Calu3 (cell line): ENCODE measurements at regions of chr5 and their contacts with region 1.

Region 1: DNA sequence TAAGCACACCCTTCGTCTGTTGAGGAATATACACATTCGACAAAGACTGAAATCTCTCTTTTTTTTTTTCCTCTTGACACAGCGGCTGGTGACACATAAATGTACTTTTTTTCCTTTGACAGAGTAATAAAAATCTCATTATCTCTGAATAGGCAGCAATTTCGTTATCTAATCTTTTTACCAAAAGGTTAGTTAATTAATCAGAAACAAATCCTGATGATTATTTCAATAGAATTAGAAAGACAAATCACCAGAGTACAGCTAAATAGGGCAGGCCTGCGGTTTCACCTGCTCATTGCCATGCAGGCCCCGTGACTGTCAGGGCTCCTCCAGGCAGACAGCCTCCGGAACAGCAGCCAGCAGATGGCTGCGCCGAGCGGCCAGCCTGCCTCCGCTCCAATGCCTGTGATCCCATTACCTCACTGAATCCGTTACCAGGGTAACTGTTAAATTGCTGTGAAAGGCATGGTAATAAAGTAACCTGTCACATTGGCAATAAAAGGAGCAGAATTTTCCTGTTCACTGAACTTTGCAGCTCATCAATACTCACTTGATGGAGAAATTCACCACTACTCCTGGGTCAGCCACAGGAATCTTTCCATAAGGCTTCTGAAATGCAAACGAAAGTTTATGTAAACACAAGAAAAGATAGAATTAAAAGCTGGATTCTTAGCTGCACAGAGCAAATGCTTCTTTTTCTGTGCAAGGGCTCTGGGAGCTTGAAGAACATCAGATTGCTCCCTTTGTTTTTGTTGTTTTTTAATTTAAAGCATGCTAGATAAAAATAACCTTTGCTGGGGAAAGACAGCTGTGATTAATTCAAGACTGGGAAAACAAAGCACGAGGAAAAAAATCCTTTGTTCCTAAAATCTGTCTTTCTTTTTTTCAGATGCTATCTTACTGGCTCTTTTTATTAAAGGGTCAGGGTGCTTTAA is 666.4 kb upstream of the ZNF608 start:
- DNase-seq: peak; percentile 87
- H3K4me3 Mint-ChIP-seq: peak overlapping the region; percentile 50
- H3K27ac Mint-ChIP-seq: peak overlapping the region; percentile 96
- H3K4me1 Mint-ChIP-seq: peaks cover 53% of the 10 kb centered on the region
- H3K27me3 Mint-ChIP-seq: no peaks in the 10 kb centered on the region
- CTCF ChIP-seq: no peak

Region 2: DNA sequence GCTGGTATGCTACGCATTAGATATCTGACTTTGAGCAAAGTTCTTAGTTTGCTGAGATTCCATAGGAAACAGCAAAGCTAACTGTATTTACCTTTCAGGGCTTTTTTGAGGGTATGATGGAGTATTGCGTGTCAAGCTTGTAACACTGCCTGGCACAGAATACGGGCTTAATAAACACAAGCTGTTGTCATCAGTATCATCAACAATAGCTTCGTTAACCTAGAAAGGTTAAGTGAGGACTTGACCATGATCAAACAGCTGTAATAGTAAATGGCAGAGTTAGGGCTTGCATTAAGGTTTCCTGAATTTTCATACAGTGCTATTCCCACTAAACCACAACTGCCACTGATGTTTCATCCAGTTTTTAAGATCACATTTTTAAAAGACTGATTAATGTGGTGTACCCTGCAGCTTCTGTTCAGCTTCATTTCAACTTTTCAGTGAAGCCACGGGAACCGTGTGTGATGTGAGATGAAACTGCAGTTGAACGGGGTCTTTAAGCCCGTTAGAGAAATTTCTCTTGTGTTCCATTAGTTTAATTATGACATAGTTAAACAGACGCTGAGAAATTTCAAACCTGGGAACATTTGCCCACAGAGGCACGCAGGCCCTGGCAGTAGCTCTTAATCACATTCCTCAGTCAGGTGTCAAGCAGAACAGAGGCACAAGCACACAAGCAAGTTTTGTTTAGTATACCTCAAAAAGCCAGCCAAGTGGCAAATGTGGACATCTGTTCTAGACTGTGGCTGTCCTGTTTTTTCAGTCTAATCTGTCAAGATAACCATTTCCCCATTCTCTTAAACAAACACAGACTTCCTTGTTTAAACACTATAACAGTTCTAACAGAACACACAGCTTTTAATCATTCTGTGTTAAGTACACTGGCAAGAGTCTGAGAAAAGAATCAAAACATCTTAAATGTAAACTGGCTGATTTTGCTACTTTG is 813.5 kb before region 1 on chr5:
- CTCF ChIA-PET with region 1: interaction called, 3 read pairs
- intact Hi-C with region 1: loop called (anchors 5 kb)
- DNase-seq: peak; percentile 67
- H3K4me3 Mint-ChIP-seq: peak overlapping the region; percentile 24
- H3K27ac Mint-ChIP-seq: peak overlapping the region; percentile 74
- H3K4me1 Mint-ChIP-seq: peaks cover 43% of the 10 kb centered on the region
- H3K27me3 Mint-ChIP-seq: no peaks in the 10 kb centered on the region
- CTCF ChIP-seq: no peak

Region 3: GRCh38 chr5:124748687-124749594 is 663.9 kb before region 1 on chr5:
- CTCF ChIA-PET with region 1: interaction called, 5 read pairs
- intact Hi-C with region 1: loop called (anchors 2 kb)
- DNase-seq: peak; percentile 83
- H3K4me3 Mint-ChIP-seq: peak overlapping the region; percentile 80
- H3K27ac Mint-ChIP-seq: peak overlapping the region; percentile 96
- H3K4me1 Mint-ChIP-seq: peaks cover 26% of the 10 kb centered on the region
- H3K27me3 Mint-ChIP-seq: no peaks in the 10 kb centered on the region
- CTCF ChIP-seq: no peak

Region 4: DNA sequence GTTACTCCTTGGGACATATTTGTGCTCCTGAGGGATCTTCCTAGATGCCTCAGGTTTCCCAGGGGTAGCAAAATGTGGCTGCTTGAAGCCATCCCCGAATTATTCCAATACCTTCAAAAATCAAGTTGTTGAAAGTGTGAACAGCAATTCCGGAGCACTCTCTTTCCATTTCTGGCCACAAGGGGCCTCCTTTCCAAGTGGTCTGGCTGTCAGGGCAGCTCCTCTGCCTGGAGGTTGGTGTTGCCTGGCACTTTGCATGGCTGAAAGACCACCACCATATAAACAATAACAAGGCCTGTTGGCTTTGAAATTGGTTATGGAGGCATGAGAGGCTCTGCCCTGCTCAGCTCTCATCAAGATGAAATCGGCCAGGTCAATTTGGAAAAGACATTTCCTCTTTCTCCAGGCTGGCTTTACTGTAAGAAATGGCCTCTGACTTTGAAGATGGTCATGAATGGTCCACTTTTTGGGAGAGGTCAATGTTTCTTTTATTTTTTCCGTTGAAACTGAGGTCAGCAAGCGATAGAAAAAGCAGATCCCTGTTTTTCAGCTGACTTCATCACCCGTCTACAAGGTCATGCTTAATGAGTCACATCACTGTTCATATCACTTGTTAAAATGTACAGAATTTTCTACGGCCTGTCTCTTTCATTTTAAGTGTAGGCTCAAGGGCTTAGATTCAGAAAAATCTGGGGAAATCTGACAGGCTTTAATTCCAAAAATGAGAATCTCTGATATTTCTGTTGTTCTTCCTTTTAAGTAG is 185.3 kb before region 1 on chr5:
- CTCF ChIA-PET with region 1: interaction called, 6 read pairs
- intact Hi-C with region 1: loop called (anchors 5 kb)
- DNase-seq: peak; percentile 66
- H3K4me3 Mint-ChIP-seq: no peak overlapping the region
- H3K27ac Mint-ChIP-seq: no peak overlapping the region
- H3K4me1 Mint-ChIP-seq: no peaks in the 10 kb centered on the region
- H3K27me3 Mint-ChIP-seq: no peaks in the 10 kb centered on the region
- CTCF ChIP-seq: peak; percentile 85

Region 5: GRCh38 chr5:125559296-125559695 is 146.5 kb after region 1 on chr5:
- CTCF ChIA-PET with region 1: no interaction called
- intact Hi-C with region 1: loop called (anchors 5 kb)
- DNase-seq: peak; percentile 44
- H3K4me3 Mint-ChIP-seq: no peak overlapping the region
- H3K27ac Mint-ChIP-seq: no peak overlapping the region
- H3K4me1 Mint-ChIP-seq: peaks cover 29% of the 10 kb centered on the region
- H3K27me3 Mint-ChIP-seq: no peaks in the 10 kb centered on the region
- CTCF ChIP-seq: no peak

Region 6: GRCh38 chr5:125848746-125849145 is 435.9 kb after region 1 on chr5:
- CTCF ChIA-PET with region 1: no interaction called
- intact Hi-C with region 1: no loop called
- DNase-seq: no peak
- H3K4me3 Mint-ChIP-seq: no peak overlapping the region
- H3K27ac Mint-ChIP-seq: no peak overlapping the region
- H3K4me1 Mint-ChIP-seq: no peaks in the 10 kb centered on the region
- H3K27me3 Mint-ChIP-seq: no peaks in the 10 kb centered on the region
- CTCF ChIP-seq: no peak